K562 (cell line): ENCODE measurements at regions of chr1 and their contacts with region 1.

Region 1: GRCh38 chr1:241847796-241848685 is at the start of gene EXO1:
- DNase-seq: peak; percentile 91 to 99 (median 94)
- ATAC-seq: peak; percentile 94
- H3K4me3 ChIP-seq: peak within 1 kb of the TSS; percentile 66
- H3K27ac ChIP-seq: peak within 1 kb of the TSS; percentile 87
- H3K4me1 ChIP-seq: peaks cover 8 to 18% of the 10 kb centered on the region in 2 experiments; a peak in 3 of 5 replicates
- H3K27me3 ChIP-seq: no peaks in the 10 kb centered on the region
- CTCF ChIP-seq: peak; percentile 57 to 75 (median 72)
- EP300 ChIP-seq: no peak
- POLR2A ChIP-seq: peak; percentile 97
- RAD21 ChIP-seq: peak; percentile 37 to 47
- polyA plus RNA-seq, gene EXO1: 36.0 to 83.9 TPM

Region 2: GRCh38 chr1:241519308-241520079 is 328.5 kb before region 1 on chr1 and contains the start of gene FH:
- CTCF ChIA-PET with region 1: no interaction called
- POLR2A ChIA-PET with region 1: interaction called, 4 read pairs
- in situ Hi-C with region 1: no loop called
- intact Hi-C with region 1: loop called (anchors 5 kb)
- DNase-seq: peak; percentile 98 to 100 (median 98)
- ATAC-seq: peak; percentile 97
- H3K4me3 ChIP-seq: peak within 1 kb of the TSS; percentile 79
- H3K27ac ChIP-seq: peak within 1 kb of the TSS; percentile 83
- H3K4me1 ChIP-seq: peaks cover 0 to 7% of the 10 kb centered on the region in 2 experiments; a peak in 3 of 5 replicates
- H3K27me3 ChIP-seq: no peaks in the 10 kb centered on the region
- CTCF ChIP-seq: no peak
- EP300 ChIP-seq: no peak; the same call in 1 of the 2 replicates
- POLR2A ChIP-seq: peak; percentile 97
- RAD21 ChIP-seq: no peak
- polyA plus RNA-seq, gene FH: 117 to 163 TPM